ENCODE measurements at regions of chrX and their contacts with region 1.

Region 1: GRCh38 chrX:103356130-103356798 is at the start of gene TCEAL9:
- DNase-seq: peak; percentile 55
- H3K4me3 Mint-ChIP-seq: peak within 1 kb of the TSS; percentile 93
- H3K27ac Mint-ChIP-seq: peak within 1 kb of the TSS; percentile 89
- H3K4me1 Mint-ChIP-seq: peaks cover 6% of the 10 kb centered on the region
- H3K27me3 Mint-ChIP-seq: peaks cover 52% of the 10 kb centered on the region
- CTCF ChIP-seq: no peak
- total RNA-seq, gene TCEAL9: 40.3 and 63.9 TPM in 2 replicates

Region 2: DNA sequence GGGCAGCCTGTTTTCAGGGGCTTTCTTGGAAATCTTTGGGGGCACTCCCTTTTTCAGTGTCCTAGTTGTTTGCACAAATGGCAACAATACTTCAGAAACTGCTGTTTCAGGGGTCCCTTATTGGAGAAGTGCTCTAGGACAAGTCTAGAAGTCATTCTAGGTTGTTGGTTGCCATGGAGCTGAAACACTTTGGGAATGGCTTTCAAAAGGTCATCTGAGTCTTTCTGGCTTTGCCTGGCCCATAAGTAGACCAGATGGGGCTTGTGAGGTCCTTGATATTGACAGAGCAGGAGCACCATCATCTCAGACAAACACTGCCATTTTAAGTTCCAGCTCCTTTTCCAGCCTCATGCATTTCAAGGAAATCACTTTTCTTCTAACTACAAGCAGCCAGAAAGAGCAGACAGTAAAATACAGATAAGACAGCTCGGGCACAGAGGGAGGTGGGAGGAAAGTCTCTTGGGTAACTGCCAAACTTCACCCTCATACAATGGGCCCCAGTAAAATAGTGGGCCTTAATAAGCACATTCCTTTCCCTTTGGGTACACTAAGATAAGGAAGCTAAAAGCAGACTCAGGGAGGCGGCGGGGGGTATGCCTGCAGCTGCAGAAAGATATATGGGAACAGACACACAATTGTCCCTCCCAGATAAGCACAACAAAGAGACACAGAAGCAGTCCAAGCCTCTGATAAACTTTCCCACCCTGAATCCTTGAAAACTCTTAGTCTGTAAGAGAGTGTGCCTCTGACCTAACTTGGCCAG is 254.8 kb before region 1 on chrX:
- CTCF ChIA-PET with region 1: no interaction called
- POLR2A ChIA-PET with region 1: no interaction called
- intact Hi-C with region 1: no loop called
- DNase-seq: no peak
- H3K4me3 Mint-ChIP-seq: no peak overlapping the region
- H3K27ac Mint-ChIP-seq: no peak overlapping the region
- H3K4me1 Mint-ChIP-seq: no peaks in the 10 kb centered on the region
- H3K27me3 Mint-ChIP-seq: peaks cover 35% of the 10 kb centered on the region
- CTCF ChIP-seq: no peak

Region 3: DNA sequence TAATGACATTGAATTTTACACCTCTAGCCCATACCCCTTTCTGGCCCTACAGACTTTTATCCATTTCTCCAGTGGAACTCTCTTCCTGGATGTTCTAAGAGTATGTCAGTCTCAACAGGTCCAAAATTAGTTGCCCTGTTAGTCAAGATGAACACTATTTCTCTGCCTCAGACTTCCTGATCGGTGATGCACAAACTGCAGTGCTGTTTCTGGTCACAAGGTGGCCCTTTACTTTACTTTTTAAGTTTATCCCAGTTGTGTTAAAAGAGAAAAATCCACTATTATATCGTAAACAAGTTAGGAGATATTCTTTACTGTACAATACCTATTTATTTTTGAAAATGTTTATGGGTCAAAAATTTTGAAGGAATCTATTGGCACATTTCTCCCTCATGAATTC is 13.2 kb before region 1 on chrX:
- CTCF ChIA-PET with region 1: interaction called, 11 read pairs
- POLR2A ChIA-PET with region 1: interaction called, 7 read pairs
- intact Hi-C with region 1: no loop called
- DNase-seq: peak; percentile 47
- H3K4me3 Mint-ChIP-seq: no peak overlapping the region
- H3K27ac Mint-ChIP-seq: peak overlapping the region; percentile 28
- H3K4me1 Mint-ChIP-seq: no peaks in the 10 kb centered on the region
- H3K27me3 Mint-ChIP-seq: peaks cover 63% of the 10 kb centered on the region
- CTCF ChIP-seq: peak; percentile 65

Region 4: DNA sequence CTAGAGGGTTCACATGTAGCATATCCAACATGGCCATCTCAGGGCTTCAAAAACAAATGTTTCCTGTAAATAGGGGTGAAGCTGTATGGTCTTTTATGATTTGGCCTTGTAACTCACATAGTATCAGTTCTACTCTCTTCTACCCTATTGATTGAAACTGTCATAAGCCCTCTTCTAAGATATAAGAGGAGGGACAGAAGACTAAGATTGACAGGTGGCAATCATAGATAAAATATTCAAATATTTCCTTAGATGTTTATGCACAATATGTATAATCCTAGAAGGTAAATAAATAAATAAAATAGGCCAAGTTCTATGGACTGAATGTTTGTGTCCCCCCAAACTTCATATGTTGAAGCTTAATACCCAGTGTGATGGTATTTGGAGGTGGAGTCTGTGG is 13.2 kb after region 1 on chrX:
- CTCF ChIA-PET with region 1: no interaction called
- POLR2A ChIA-PET with region 1: interaction called, 51 read pairs
- intact Hi-C with region 1: no loop called
- DNase-seq: no peak
- H3K4me3 Mint-ChIP-seq: no peak overlapping the region
- H3K27ac Mint-ChIP-seq: no peak overlapping the region
- H3K4me1 Mint-ChIP-seq: peaks cover 14% of the 10 kb centered on the region
- H3K27me3 Mint-ChIP-seq: peaks cover 70% of the 10 kb centered on the region
- CTCF ChIP-seq: no peak

Region 5: DNA sequence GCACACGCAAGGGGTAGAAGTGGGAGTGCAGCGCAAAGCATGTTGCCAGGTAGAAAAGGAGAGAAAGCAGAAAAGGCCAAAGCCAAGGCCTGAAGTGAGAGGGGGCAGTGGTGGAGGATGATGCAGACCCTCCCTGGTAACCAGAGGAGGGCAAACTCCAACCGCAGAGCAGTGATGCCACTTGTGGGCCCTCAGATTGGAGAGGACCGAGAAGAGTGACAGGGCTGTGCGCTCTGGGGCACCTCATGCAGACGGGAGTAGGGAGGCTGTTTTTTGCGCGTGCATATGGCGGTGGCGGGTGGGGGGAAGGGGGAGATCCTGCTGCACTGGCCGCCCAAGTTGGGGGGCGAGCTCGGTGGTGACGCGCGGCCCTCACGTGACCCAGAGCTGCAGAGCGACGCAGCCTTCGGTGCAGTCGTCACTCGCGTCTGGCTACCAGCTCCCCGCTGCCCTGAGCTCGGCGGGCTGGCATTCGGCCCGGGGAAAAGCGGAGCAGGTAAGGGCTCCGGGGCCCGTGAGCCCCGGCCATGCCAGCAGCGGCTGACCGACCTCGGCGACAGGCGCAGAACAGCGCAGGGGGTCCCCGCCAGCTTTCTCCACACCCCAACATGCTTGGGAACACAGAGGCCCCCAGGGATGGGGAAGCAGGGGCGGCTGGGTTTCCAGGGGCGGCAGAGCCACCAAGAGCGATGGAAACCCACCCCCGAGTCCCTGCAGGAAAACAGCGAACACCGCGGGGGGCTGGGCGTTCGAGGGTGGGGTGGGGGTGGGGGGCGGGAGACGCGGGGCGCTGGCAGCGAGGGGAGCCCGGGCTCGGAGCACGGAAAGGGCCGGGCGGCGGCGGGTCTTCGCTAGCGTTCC is 20.1 kb after region 1 on chrX and contains the start of gene BEX3:
- CTCF ChIA-PET with region 1: interaction called, 3 read pairs
- POLR2A ChIA-PET with region 1: interaction called, 51 read pairs
- intact Hi-C with region 1: no loop called
- DNase-seq: peak; percentile 29
- H3K4me3 Mint-ChIP-seq: peak within 1 kb of the TSS; percentile 74
- H3K27ac Mint-ChIP-seq: peak within 1 kb of the TSS; percentile 67
- H3K4me1 Mint-ChIP-seq: peaks cover 5% of the 10 kb centered on the region
- H3K27me3 Mint-ChIP-seq: peaks cover 24% of the 10 kb centered on the region
- CTCF ChIP-seq: no peak
- total RNA-seq, gene BEX3: 166 and 173 TPM in 2 replicates

Region 6: GRCh38 chrX:103442536-103442901 is 86.3 kb after region 1 on chrX:
- CTCF ChIA-PET with region 1: interaction called, 4 read pairs
- POLR2A ChIA-PET with region 1: interaction called, 26 read pairs
- intact Hi-C with region 1: no loop called
- DNase-seq: peak; percentile 79
- H3K4me3 Mint-ChIP-seq: peak overlapping the region; percentile 5
- H3K27ac Mint-ChIP-seq: peak overlapping the region; percentile 49
- H3K4me1 Mint-ChIP-seq: peaks cover 16% of the 10 kb centered on the region
- H3K27me3 Mint-ChIP-seq: no peaks in the 10 kb centered on the region
- CTCF ChIP-seq: no peak

Region 7: DNA sequence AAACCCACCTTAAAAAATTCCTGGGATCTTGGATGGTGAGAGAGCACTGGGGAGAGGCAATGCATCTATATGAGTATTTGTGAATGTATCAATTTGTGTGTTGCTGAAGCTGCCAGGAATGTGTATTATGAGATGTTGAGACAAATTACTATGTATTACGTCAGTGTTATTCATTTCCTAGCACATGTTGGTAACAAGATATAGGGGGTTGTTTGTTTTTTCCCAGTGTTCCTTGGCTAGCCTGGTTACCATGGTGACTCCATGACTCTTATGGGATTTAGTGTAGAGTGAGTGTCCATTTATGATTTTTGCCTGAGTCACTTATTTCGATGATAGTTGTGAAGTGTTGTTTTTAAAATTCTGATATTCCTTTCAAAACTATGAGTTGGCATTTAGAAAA is 97.4 kb after region 1 on chrX:
- CTCF ChIA-PET with region 1: no interaction called
- POLR2A ChIA-PET with region 1: no interaction called
- intact Hi-C with region 1: loop called (anchors 1 kb)
- DNase-seq: peak; percentile 90
- H3K4me3 Mint-ChIP-seq: peak overlapping the region; percentile 30
- H3K27ac Mint-ChIP-seq: peak overlapping the region; percentile 87
- H3K4me1 Mint-ChIP-seq: peaks cover 4% of the 10 kb centered on the region
- H3K27me3 Mint-ChIP-seq: no peaks in the 10 kb centered on the region
- CTCF ChIP-seq: no peak